ENCODE measurements at regions of chr12 and their contacts with region 1.

Region 1: DNA sequence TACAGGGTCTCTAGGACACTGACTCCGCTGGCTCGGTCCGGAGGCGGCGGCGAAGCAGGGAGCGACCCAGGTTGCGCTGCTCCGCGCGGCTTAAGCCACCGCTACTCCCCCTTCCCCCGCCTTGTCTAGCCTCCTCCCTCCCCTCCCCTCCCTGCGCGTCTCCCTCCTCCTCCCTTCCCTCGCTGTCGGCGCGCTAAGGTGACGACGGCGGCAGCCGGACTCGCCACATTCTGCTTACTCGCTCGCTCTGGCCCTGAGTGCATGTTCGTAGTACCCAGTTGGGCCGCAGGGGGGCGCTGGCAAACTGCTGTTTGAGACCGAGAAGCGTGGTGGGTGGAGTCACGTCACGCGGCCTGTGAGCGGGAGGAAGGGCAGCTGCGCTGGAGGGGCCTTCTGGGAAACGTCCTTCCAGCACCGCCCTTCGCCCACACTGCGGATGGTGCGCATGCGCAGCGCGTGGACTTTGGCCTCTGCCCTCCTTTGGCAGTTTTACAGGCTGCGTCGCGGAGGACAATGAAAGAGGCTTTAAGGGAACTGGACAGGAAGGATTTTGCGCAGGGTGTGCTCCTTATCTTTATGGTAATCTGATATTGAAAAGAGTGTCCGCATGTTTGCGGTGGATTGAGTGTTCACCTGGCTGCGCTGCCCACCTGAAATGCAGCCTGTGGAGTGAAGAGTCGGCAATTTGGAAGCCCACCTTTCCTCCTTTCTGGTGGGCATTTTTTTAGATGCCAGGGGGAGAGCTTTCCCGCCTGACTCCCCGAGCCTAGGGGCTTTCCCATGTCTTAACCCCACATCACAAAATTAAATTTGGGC is at the start of gene SCAF11:
- DNase-seq: peak; percentile 100
- ATAC-seq: peak; percentile 96
- total RNA-seq, gene SCAF11: 76.6 TPM

Region 2: GRCh38 chr12:45543906-45544315 is 446.8 kb before region 1 on chr12:
- intact Hi-C with region 1: loop called (anchors 10 kb)
- DNase-seq: no peak
- ATAC-seq: peak; percentile 76

Region 3: GRCh38 chr12:45728630-45729232 is 261.9 kb before region 1 on chr12:
- intact Hi-C with region 1: loop called (anchors 1 kb)
- DNase-seq: peak; percentile 98
- ATAC-seq: peak; percentile 87

Region 4: GRCh38 chr12:45762185-45763110 is 228.2 kb before region 1 on chr12:
- intact Hi-C with region 1: loop called (anchors 10 kb)
- DNase-seq: no peak
- ATAC-seq: no peak

Region 5: DNA sequence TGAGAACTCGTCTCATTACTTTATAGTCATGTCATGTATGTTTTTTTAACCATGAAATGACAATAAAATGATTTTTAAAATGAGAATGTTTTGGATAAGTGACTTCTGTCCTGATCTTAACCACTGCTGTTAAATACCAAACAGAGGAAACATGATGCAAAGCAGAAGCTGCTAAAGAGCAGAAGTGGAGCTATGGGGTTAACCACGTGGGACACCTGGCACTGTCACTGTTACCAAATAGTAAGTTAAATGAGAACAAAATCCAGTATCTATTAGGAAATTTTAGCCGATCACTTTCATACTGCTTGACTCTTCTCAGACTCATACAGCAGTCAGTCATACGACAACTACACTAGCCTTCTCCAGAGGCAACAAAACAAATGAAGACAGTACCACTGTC is 82.7 kb before region 1 on chr12:
- intact Hi-C with region 1: no loop called
- DNase-seq: no peak
- ATAC-seq: no peak

Region 6: GRCh38 chr12:46005151-46005797 is 14.6 kb after region 1 on chr12:
- intact Hi-C with region 1: no loop called
- DNase-seq: no peak
- ATAC-seq: no peak

Region 7: DNA sequence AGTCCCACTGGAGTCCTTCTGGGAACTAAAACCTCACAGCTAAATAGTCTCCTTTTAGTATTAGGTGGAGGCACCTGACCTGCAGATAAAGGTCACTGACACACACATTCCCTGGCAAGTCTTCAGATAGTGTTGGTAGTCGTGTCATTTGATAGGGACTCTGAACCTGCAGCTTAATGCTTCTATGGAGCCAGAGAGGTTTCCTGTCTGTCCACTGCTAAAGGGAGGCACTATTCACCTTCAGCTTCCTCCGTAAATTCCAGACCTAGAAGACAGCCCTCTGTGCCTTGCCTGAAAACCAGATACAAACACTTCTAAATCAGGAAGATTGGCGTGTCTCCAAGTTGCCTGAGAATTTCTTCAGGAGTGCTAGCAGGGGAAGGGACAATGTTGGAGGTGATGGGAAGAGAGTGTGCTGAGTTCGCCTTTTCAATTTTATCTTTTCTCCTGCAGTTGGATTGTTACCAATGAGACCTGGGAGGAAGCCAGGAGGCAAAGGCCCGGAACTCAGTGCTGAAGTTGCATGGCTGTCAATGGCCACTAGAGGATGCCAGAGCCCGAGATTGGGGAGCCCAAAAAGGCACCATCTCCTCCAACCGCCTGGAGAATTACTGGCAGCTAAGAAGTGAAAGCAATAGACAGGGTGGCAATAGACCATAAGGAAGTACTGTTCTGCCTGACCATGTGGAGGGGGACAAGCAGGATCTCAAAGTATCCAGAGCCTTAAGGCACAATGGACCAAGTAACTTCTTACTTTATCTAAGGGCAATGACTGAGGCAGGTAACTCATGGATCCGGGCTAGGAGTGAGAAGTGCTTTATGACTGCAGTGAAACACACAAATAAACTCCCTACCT is 81.3 kb after region 1 on chr12:
- intact Hi-C with region 1: loop called (anchors 5 kb)
- DNase-seq: peak; percentile 71
- ATAC-seq: peak; percentile 85

Region 8: GRCh38 chr12:46372544-46373110 is 382.0 kb after region 1 on chr12 and contains the start of gene SLC38A2:
- intact Hi-C with region 1: loop called (anchors 5 kb)
- DNase-seq: peak; percentile 100
- ATAC-seq: peak; percentile 98
- total RNA-seq, gene SLC38A2: 161 TPM

Region 9: DNA sequence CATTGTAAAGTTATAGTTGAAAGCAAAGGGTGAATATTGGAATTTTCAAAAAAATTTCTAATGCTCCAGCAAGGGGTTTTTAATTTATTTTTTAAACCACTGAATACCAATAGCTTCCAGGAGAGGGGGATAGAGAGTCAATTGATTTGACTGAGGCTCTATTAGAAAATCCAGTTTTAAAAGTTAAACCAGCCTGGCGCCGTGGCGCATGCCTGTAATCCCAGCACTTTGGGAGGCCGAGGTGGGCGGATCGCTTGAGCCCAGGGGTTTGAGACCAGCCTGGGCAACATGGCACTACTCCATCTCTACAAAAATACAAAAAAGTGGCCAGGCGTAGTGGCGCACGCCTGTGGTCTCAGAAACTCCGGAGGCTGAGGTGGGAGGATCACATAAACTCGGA is 685.1 kb after region 1 on chr12:
- intact Hi-C with region 1: loop called (anchors 10 kb)
- DNase-seq: no peak
- ATAC-seq: no peak

Measured in Right ventricle myocardium inferior (tissue), 1 donor.